Activated naive CD4-positive, alpha-beta T cell treated with anti-CD3 and anti-CD28 coated beads, Interleukin-2, amount 10 ng/mL, durations not matched to agents 7 days and 5 days (primary cell): ENCODE measurements at regions of chr1 and their contacts with region 1.

Region 1: GRCh38 chr1:206784471-206784903 is 12.2 kb upstream of the IL10 start:
- DNase-seq: peak; percentile 93
- H3K4me3 Mint-ChIP-seq: peak overlapping the region; percentile 51
- H3K27ac Mint-ChIP-seq: peak overlapping the region; percentile 84
- H3K4me1 Mint-ChIP-seq: peaks cover 62% of the 10 kb centered on the region
- H3K27me3 Mint-ChIP-seq: peaks cover 45% of the 10 kb centered on the region

Region 2: GRCh38 chr1:206797534-206798383 is 13.3 kb after region 1 on chr1:
- CTCF ChIA-PET with region 1: interaction called, 15 read pairs
- DNase-seq: peak; percentile 40
- H3K4me3 Mint-ChIP-seq: no peak overlapping the region
- H3K27ac Mint-ChIP-seq: no peak overlapping the region
- H3K4me1 Mint-ChIP-seq: peaks cover 32% of the 10 kb centered on the region
- H3K27me3 Mint-ChIP-seq: peaks cover 94% of the 10 kb centered on the region

Region 3: GRCh38 chr1:206854401-206855129 is 70.1 kb after region 1 on chr1:
- CTCF ChIA-PET with region 1: no interaction called
- DNase-seq: no peak
- H3K4me3 Mint-ChIP-seq: no peak overlapping the region
- H3K27ac Mint-ChIP-seq: no peak overlapping the region
- H3K4me1 Mint-ChIP-seq: peaks cover 32% of the 10 kb centered on the region
- H3K27me3 Mint-ChIP-seq: peaks cover 37% of the 10 kb centered on the region

Region 4: DNA sequence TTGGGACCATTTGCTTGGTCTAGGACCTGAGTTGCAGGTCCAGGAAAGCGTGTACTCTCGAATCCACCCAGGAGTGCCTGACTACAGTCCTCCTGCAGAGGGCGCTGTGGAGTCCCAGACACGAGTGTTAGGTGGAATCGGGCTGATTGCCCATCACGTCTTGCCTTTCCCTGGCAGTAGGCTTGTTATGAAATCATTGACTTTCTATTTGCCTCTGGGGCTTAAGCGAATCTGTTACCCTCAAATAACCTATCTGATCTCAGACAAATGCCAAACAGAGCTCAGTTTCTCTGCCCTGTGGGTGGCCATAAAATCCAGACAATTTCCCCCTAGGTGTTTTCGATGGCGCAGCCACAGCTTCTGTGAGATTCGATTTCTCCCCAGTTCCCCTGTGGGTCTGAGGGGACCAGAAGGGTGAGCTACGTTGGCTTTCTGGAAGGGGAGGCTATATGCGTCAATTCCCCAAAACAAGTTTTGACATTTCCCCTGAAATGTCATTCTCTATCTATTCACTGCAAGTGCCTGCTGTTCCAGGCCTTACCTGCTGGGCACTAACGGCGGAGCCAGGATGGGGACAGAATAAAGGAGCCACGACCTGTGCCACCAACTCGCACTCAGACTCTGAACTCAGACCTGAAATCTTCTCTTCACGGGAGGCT is 80.7 kb after region 1 on chr1 and contains the start of gene IL20:
- CTCF ChIA-PET with region 1: no interaction called
- DNase-seq: peak; percentile 84
- H3K4me3 Mint-ChIP-seq: no peak within 1 kb of the TSS
- H3K27ac Mint-ChIP-seq: no peak within 1 kb of the TSS
- H3K4me1 Mint-ChIP-seq: peaks cover 7% of the 10 kb centered on the region
- H3K27me3 Mint-ChIP-seq: peaks cover 62% of the 10 kb centered on the region